K562 (cell line): ENCODE measurements at regions of chr9 and their contacts with region 1.

Region 1: GRCh38 chr9:95268681-95269080 is 48.8 kb downstream of the FANCC start:
- DNase-seq: peak in 2 of 4 experiments; percentile 20 to 45
- ATAC-seq: peak; percentile 84
- H3K4me3 ChIP-seq: no peak overlapping the region
- H3K27ac ChIP-seq: no peak overlapping the region
- H3K4me1 ChIP-seq: no peaks in the 10 kb centered on the region
- H3K27me3 ChIP-seq: peaks cover 0 to 5% of the 10 kb centered on the region in 2 experiments; a peak in 2 of 5 replicates
- CTCF ChIP-seq: peak; percentile 50 to 68 (median 60)
- EP300 ChIP-seq: no peak
- POLR2A ChIP-seq: no peak
- RAD21 ChIP-seq: peak; percentile 60 to 73

Region 2: GRCh38 chr9:94681508-94681907 is 587.2 kb before region 1 on chr9:
- CTCF ChIA-PET with region 1: no interaction called
- POLR2A ChIA-PET with region 1: no interaction called
- in situ Hi-C with region 1: no loop called
- intact Hi-C with region 1: loop called (anchors 10 kb)
- DNase-seq: peak; percentile 39 to 72 (median 55)
- ATAC-seq: peak; percentile 97
- H3K4me3 ChIP-seq: no peak overlapping the region
- H3K27ac ChIP-seq: no peak overlapping the region
- H3K4me1 ChIP-seq: no peaks in the 10 kb centered on the region
- H3K27me3 ChIP-seq: peaks cover 21 to 32% of the 10 kb centered on the region in 2 experiments; a peak in 4 of 5 replicates
- CTCF ChIP-seq: peak; percentile 77 to 78 (median 78)
- EP300 ChIP-seq: no peak
- POLR2A ChIP-seq: no peak
- RAD21 ChIP-seq: peak; percentile 83 to 90

Region 3: DNA sequence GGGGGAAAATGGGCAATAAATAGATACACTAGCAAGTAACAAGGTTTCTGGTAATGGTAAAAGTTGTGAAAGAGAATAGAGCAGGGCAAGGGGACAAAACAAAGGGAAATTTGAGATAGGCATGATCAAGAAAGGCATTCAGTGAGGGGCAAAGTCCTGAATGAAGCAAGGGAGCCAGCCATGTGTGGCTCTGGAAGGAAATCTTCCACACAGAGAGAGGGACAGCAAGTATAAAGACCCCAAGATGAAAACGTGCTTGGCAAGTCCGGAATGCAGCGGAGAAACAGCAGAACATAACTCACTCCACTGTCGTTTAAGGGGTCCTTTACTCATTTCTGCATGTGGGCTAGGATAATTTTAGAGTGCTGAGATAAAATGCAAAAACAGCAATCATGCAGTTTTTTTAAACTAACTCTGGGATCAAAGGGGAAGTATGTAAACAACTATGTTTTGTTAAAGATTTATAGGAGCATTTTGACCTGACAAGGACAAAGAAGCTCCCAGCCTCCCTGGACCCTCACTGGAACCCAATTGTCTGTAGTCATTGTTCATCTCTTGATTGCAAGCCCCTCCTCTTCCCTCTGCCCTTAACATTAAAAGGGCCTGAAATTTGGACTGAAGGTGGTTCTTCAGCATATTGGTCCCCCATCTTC is 565.1 kb before region 1 on chr9:
- CTCF ChIA-PET with region 1: no interaction called
- POLR2A ChIA-PET with region 1: no interaction called
- in situ Hi-C with region 1: no loop called
- intact Hi-C with region 1: no loop called
- DNase-seq: no peak
- ATAC-seq: no peak
- H3K4me3 ChIP-seq: no peak overlapping the region
- H3K27ac ChIP-seq: no peak overlapping the region
- H3K4me1 ChIP-seq: no peaks in the 10 kb centered on the region
- H3K27me3 ChIP-seq: peaks cover 23 to 28% of the 10 kb centered on the region in 2 experiments
- CTCF ChIP-seq: no peak
- EP300 ChIP-seq: no peak
- POLR2A ChIP-seq: no peak
- RAD21 ChIP-seq: no peak

Region 4: DNA sequence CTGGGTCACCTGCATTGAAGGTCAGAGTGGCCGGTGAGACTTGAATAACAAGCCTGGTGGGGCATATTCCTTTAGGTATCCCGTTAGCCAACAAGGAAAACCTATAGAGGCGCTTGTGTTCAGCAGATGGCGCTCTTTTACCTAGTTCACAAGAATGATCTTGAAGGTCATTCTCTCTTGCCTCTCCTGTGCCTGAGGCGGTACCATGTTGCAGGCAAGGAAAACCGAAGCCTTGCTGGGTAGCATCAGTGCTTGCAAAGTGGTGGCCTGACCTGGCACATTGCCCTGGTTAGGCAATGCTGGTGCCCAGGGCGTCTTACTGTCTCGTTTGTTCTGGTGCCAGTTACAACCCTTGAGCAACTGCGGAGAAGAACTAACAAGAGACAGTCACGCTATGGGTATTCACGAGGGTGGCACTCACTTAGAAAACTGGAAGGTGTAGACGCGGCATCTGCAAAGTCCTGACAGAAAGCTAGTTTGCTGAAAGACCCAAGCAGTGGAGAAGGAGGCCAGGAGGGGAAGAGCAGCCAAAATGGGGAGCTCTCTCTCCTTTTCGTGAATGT is 485.5 kb before region 1 on chr9:
- CTCF ChIA-PET with region 1: no interaction called
- POLR2A ChIA-PET with region 1: no interaction called
- in situ Hi-C with region 1: no loop called
- intact Hi-C with region 1: loop called (anchors 10 kb)
- DNase-seq: peak in 3 of 4 experiments; percentile 29 to 70 (median 30)
- ATAC-seq: peak; percentile 90
- H3K4me3 ChIP-seq: no peak overlapping the region
- H3K27ac ChIP-seq: no peak overlapping the region
- H3K4me1 ChIP-seq: peaks cover 0 to 5% of the 10 kb centered on the region in 2 experiments; a peak in 1 of 5 replicates
- H3K27me3 ChIP-seq: no peaks in the 10 kb centered on the region
- CTCF ChIP-seq: peak; percentile 72 to 84 (median 75)
- EP300 ChIP-seq: no peak
- POLR2A ChIP-seq: no peak
- RAD21 ChIP-seq: peak; percentile 69 to 90

Region 5: GRCh38 chr9:95127249-95128176 is 141.2 kb before region 1 on chr9:
- CTCF ChIA-PET with region 1: no interaction called
- POLR2A ChIA-PET with region 1: no interaction called
- in situ Hi-C with region 1: no loop called
- intact Hi-C with region 1: loop called (anchors 5 kb)
- DNase-seq: peak; percentile 81 to 82 (median 82)
- ATAC-seq: peak; percentile 99
- H3K4me3 ChIP-seq: no peak overlapping the region
- H3K27ac ChIP-seq: no peak overlapping the region
- H3K4me1 ChIP-seq: peaks cover 0 to 6% of the 10 kb centered on the region in 2 experiments; a peak in 2 of 5 replicates
- H3K27me3 ChIP-seq: no peaks in the 10 kb centered on the region
- CTCF ChIP-seq: peak; percentile 96 to 99 (median 99)
- EP300 ChIP-seq: no peak
- POLR2A ChIP-seq: no peak
- RAD21 ChIP-seq: peak; percentile 81 to 90

Region 6: GRCh38 chr9:95249986-95250385 is 18.7 kb before region 1 on chr9:
- CTCF ChIA-PET with region 1: no interaction called
- POLR2A ChIA-PET with region 1: interaction called, 10 read pairs
- in situ Hi-C with region 1: no loop called
- intact Hi-C with region 1: no loop called
- DNase-seq: no peak
- ATAC-seq: no peak; the same call in 2 of the 3 replicates
- H3K4me3 ChIP-seq: no peak overlapping the region
- H3K27ac ChIP-seq: no peak overlapping the region
- H3K4me1 ChIP-seq: peaks cover 3 to 4% of the 10 kb centered on the region in 2 experiments; a peak in 3 of 5 replicates
- H3K27me3 ChIP-seq: no peaks in the 10 kb centered on the region
- CTCF ChIP-seq: no peak
- EP300 ChIP-seq: no peak
- POLR2A ChIP-seq: no peak
- RAD21 ChIP-seq: no peak

Region 7: DNA sequence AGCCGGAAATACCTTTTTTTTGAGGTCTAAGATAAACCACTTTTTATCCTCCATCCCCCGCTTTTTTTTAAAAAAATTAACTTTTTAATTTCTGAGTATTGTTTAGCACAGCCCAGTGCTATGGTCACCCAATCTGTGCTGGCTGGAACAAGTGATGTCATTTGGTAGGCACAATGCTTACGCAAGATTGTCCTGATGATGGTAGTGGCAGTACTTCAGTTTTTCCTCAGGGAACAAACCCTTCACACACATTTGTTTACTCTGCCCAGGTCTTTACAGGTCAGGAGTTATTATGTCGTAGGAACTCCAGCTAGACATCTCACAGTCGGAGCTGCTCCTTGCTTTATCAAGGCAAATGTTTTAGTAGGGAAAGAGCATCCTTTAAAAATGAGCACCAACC is 268.6 kb after region 1 on chr9:
- CTCF ChIA-PET with region 1: no interaction called
- POLR2A ChIA-PET with region 1: no interaction called
- in situ Hi-C with region 1: no loop called
- intact Hi-C with region 1: no loop called
- DNase-seq: no peak
- ATAC-seq: no peak
- H3K4me3 ChIP-seq: no peak overlapping the region
- H3K27ac ChIP-seq: no peak overlapping the region
- H3K4me1 ChIP-seq: no peaks in the 10 kb centered on the region
- H3K27me3 ChIP-seq: peaks cover 12 to 21% of the 10 kb centered on the region in 2 experiments
- CTCF ChIP-seq: no peak
- EP300 ChIP-seq: no peak
- POLR2A ChIP-seq: no peak
- RAD21 ChIP-seq: no peak

Region 8: DNA sequence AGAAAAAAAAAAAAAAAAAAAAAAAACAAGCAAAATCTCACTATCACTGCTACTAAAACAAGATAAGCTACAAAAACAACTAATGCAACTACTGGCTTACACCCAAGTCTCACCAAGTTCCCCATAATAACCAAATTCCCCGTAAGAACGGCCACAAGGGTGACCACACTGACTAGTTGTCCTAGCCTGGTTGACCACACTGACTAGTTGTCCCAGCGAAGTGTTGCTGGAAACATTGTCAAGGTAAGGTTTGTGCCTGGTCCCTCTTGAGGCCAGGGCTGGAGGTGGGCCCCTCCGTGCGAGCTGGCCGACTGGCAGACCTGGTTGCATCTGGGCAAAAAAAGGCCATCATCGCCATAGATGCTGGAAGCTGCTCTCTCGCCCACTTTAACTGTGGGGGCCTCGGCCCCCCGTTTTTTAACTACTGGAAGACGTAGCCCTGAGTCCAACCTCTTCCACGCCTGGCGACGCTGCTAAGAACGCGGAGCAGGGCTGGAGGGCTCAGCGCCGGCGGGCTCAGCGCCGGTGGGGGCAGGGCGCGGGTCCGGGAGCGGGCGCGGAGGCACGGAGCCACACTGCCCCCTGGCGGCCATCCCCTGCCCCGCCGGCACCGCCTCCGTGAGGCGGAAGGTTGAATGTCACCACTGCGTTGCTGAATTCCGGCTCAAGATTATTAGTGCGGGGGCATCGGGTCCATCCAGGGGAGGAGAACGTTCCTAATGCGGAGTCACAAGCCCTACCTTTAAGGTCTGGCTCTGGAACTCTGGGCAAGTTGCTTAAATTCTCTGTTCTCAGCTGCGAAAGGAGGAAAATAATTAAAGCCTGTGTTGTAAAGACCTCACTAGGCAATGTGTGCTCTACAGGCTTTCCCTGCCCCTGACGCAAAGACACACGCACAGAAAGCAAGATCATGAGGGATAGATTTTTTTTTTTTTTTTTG is 949.3 kb after region 1 on chr9:
- CTCF ChIA-PET with region 1: no interaction called
- POLR2A ChIA-PET with region 1: no interaction called
- in situ Hi-C with region 1: loop called (anchors 10 kb)
- intact Hi-C with region 1: no loop called
- DNase-seq: peak; percentile 75 to 90 (median 86)
- ATAC-seq: peak; percentile 98
- H3K4me3 ChIP-seq: no peak overlapping the region
- H3K27ac ChIP-seq: no peak overlapping the region
- H3K4me1 ChIP-seq: peaks cover 4 to 20% of the 10 kb centered on the region in 2 experiments; a peak in 2 of 5 replicates
- H3K27me3 ChIP-seq: peaks cover under 1 to 37% of the 10 kb centered on the region in 2 experiments; a peak in 4 of 5 replicates
- CTCF ChIP-seq: peak; percentile 93 to 99 (median 97)
- EP300 ChIP-seq: no peak
- POLR2A ChIP-seq: no peak
- RAD21 ChIP-seq: peak; percentile 76 to 84